Caco-2 (cell line): ENCODE measurements at regions of chr19 and their contacts with region 1.

Region 1: GRCh38 chr19:33100894-33101644 is 20.1 kb downstream of the GPATCH1 start:
- DNase-seq: peak; percentile 88 to 90
- H3K4me3 ChIP-seq: no peak overlapping the region
- H3K4me3 Mint-ChIP-seq: peak overlapping the region; percentile 38
- H3K27ac Mint-ChIP-seq: peak overlapping the region; percentile 92
- H3K4me1 ChIP-seq: peaks cover 25% of the 10 kb centered on the region
- H3K4me1 Mint-ChIP-seq: peaks cover 30% of the 10 kb centered on the region
- H3K27me3 ChIP-seq: no peaks in the 10 kb centered on the region
- H3K27me3 Mint-ChIP-seq: no peaks in the 10 kb centered on the region
- CTCF ChIP-seq: no peak

Region 2: DNA sequence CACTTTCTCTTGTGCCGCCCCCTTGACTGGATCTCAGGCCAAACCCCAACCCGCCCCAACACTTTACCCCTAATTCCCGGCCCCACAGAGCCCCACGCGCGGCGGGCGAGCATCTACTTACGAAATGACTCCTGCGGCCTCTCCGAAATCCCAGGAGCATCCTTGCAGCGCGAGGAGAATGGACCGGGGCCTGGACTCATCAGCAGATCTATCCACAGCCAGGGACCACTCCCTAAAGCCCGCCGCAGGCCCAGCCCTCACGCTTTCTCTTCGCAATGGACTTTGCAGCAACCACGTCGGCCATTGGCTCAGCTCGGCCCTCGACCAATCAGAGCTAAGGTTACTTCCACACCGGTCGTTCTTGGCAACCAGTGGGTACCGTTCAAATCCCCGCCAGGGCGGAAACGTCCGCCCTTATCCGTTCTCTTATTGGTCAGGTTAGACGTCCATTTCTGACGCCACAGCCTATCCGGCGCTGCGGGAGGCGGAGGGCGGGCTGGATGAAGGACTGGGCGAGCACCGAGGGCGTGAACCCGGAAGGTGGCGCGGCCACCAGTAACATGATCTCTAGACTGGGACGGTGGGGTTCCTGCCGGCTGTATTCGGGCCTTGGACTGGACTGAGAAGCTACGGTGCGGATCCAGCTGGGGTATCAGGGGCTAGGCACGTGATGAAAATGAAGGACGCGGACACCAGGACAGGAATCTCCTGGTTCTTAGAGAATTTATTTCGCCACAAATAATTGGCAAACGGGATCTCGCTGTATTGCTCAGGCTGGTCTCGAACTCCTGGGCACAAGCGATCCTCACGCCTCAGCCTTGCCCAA is 129.1 kb before region 1 on chr19 and contains the starts of genes CEP89 and FAAP24:
- CTCF ChIA-PET with region 1: no interaction called
- POLR2A ChIA-PET with region 1: no interaction called
- intact Hi-C with region 1: loop called (anchors 5 kb)
- DNase-seq: peak; percentile 99 to 100
- H3K4me3 ChIP-seq: peak within 1 kb of the TSS; percentile 66
- H3K4me3 Mint-ChIP-seq: peak within 1 kb of the TSS; percentile 88
- H3K27ac Mint-ChIP-seq: peak within 1 kb of the TSS; percentile 91
- H3K4me1 ChIP-seq: no peaks in the 10 kb centered on the region; the same call in 1 of the 2 replicates
- H3K4me1 Mint-ChIP-seq: no peaks in the 10 kb centered on the region
- H3K27me3 ChIP-seq: no peaks in the 10 kb centered on the region
- H3K27me3 Mint-ChIP-seq: no peaks in the 10 kb centered on the region
- CTCF ChIP-seq: no peak
- total RNA-seq, gene CEP89: 14.5 and 17.3 TPM in 2 replicates
- total RNA-seq, gene FAAP24: 9.6 and 12.0 TPM in 2 replicates

Region 3: DNA sequence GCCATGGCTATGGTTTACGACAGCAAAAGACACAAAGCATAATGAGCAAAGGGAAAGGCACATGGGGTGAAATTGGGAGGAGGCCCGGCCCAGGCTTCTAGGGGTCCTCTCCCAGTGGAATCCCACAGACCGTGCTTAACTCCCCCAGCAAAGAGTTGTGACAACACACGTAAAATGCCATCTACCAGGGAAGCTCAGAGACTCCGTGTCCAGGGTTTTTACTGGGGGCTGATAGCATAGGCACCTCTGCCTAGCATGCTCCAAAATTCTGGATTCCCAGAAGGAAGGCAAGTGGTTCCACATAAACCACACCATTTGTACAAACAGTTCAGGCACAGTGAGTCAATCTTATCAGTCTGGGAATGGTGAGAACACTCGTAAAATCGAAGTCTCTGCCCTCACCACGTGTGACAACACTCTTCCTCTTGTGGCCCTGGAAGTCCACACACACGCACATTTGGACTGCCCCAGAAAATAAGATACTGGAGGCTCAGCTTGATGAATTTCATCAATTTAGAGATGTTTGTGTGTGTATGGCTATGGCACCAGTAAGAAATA is 71.2 kb before region 1 on chr19:
- CTCF ChIA-PET with region 1: no interaction called
- POLR2A ChIA-PET with region 1: no interaction called
- intact Hi-C with region 1: loop called (anchors 2 kb)
- DNase-seq: no peak
- H3K4me3 ChIP-seq: no peak overlapping the region
- H3K4me3 Mint-ChIP-seq: no peak overlapping the region
- H3K27ac Mint-ChIP-seq: no peak overlapping the region
- H3K4me1 ChIP-seq: peaks cover 17% of the 10 kb centered on the region
- H3K4me1 Mint-ChIP-seq: peaks cover 15% of the 10 kb centered on the region
- H3K27me3 ChIP-seq: no peaks in the 10 kb centered on the region
- H3K27me3 Mint-ChIP-seq: no peaks in the 10 kb centered on the region
- CTCF ChIP-seq: no peak

Region 4: GRCh38 chr19:33064792-33065550 is 36.1 kb before region 1 on chr19 and contains the start of gene RHPN2:
- CTCF ChIA-PET with region 1: interaction called, 3 read pairs
- POLR2A ChIA-PET with region 1: interaction called, 5 read pairs
- intact Hi-C with region 1: loop called (anchors 5 kb)
- DNase-seq: peak; percentile 85 to 87
- H3K4me3 ChIP-seq: peak within 1 kb of the TSS; percentile 98
- H3K4me3 Mint-ChIP-seq: peak within 1 kb of the TSS; percentile 92
- H3K27ac Mint-ChIP-seq: peak within 1 kb of the TSS; percentile 90
- H3K4me1 ChIP-seq: peaks cover 42% of the 10 kb centered on the region
- H3K4me1 Mint-ChIP-seq: peaks cover 18% of the 10 kb centered on the region
- H3K27me3 ChIP-seq: no peaks in the 10 kb centered on the region
- H3K27me3 Mint-ChIP-seq: no peaks in the 10 kb centered on the region
- CTCF ChIP-seq: no peak
- total RNA-seq, gene RHPN2: 69.5 and 78.5 TPM in 2 replicates

Region 5: DNA sequence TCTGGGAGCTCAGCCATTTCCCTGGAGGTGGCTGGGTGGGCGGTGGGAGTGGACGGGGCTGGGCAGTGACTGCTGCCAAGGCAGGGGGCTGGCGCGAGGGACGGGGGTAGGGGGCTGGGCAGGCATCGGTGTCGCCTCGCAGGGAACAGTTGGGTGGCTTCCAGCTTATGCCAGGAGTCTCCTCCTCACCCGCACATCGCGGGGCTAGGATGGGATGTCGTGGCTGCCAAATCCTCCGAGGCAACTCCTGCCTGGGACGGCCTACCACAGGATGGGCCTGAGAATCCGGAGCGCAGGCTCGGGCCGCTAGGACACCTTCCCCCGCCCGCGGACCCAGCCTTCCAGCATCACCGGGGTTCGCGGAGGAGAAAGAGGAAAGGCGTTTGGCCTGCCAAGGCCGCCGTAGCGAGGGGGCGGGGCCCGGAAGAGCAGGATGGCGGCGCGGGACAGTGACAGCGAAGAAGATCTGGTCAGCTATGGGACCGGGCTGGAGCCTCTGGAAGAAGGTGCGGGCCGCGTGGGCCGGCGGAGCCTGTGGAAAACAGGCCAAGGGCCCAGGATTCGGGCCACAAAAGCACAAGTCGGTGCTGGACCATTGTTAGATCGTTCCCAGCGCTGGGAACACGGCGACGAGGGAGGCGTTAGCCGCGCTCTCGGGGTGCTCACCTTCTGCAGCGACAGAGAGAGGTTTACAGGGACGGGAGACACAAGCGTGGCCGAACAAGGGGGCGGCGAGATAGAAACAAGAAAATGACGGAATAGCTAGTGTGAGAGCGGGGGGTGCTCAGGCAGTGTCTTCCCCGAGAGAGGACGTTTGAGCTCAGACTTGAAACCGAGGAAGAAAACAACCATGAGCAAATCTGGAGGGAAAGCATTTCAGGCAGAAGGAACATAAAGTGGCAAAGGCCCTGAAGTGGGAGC is 20.0 kb before region 1 on chr19 and contains the start of gene GPATCH1:
- CTCF ChIA-PET with region 1: interaction called, 5 read pairs
- POLR2A ChIA-PET with region 1: interaction called, 7 read pairs
- intact Hi-C with region 1: loop called (anchors 1 kb)
- DNase-seq: peak; percentile 92 to 95
- H3K4me3 ChIP-seq: peak within 1 kb of the TSS; percentile 76
- H3K4me3 Mint-ChIP-seq: peak within 1 kb of the TSS; percentile 100
- H3K27ac Mint-ChIP-seq: peak within 1 kb of the TSS; percentile 98
- H3K4me1 ChIP-seq: peaks cover 27% of the 10 kb centered on the region
- H3K4me1 Mint-ChIP-seq: peaks cover 29% of the 10 kb centered on the region
- H3K27me3 ChIP-seq: no peaks in the 10 kb centered on the region
- H3K27me3 Mint-ChIP-seq: no peaks in the 10 kb centered on the region
- CTCF ChIP-seq: no peak
- total RNA-seq, gene GPATCH1: 16.1 and 17.1 TPM in 2 replicates